ENCODE measurements at regions of chr12 and their contacts with region 1.

Region 1: DNA sequence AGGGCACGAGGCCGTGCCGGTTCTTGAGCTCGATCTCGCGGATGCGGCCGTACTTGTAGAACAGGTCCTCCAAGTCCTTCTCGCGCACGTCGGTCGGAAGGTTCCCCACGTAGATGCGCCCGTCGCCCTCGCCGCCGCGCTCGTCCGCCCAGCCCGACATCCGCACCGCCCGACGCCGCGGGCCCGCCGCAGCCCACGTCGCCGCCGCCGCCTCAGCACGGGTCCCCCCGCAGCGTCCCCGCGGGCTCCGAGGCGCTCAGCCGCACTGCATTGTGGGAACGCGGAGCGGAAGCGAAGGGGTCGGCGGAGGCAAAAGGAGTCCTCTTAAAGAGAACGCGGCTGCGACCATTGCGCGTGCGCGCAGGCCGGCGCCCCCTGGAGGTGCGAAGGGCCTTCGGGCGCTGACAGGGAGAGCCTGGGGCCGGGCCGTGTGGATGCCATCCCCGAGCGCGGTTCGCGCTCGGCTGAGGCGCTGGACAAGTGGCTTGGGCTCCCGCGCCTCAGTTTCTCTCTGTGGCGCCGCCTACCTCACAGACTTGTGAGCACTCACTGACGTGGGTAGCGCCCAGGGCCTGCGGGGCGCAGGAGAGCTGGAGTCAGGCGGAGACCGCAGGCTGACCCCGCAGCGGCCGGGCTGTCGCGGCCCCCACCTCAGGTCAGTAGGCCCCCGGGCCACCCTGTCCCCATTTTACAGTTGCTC is at the start of gene SRSF9:
- DNase-seq: peak; percentile 97
- ATAC-seq: peak; percentile 95
- H3K4me3 Mint-ChIP-seq: peak within 1 kb of the TSS; percentile 95
- H3K27ac Mint-ChIP-seq: peak within 1 kb of the TSS; percentile 88
- H3K4me1 Mint-ChIP-seq: peaks cover 36% of the 10 kb centered on the region
- H3K27me3 Mint-ChIP-seq: no peaks in the 10 kb centered on the region
- total RNA-seq, gene SRSF9: 195 to 240 TPM

Region 2: DNA sequence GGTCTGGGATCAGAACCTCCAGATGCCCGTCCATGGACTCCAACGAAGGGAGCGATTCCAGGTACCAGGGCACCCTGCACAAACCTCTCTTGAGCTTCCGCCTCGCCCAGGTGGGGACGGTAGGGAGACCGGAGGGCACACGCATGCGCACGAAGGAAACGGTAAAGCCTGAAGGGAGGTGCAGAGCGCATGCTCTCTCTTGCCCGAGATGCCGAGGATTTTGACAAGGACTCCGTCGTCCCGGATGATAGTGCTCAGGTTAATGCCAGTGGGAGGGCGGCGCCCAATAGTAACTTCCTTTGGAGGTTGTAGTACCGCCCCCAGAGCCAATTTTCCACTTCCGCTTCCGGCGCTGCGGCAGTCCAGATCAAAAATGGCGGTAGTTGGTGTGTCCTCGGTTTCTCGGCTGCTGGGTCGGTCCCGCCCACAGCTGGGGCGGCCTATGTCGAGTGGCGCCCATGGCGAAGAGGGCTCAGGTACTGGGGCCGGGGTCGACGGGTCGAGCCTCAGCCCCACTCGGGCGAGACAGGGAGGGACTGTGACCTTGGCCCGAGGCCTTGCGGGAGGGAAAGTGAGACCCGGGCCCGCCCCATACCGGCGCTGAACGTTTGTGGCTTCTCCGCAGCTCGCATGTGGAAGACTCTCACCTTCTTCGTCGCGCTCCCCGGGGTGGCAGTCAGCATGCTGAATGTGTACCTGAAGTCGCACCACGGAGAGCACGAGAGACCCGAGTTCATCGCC is 31.7 kb before region 1 on chr12 and contains the start of gene COX6A1:
- CTCF ChIA-PET with region 1: interaction called, 30 read pairs
- DNase-seq: peak; percentile 99
- ATAC-seq: peak; percentile 98
- H3K4me3 Mint-ChIP-seq: peak within 1 kb of the TSS; percentile 86
- H3K27ac Mint-ChIP-seq: peak within 1 kb of the TSS; percentile 95
- H3K4me1 Mint-ChIP-seq: peaks cover 39% of the 10 kb centered on the region
- H3K27me3 Mint-ChIP-seq: no peaks in the 10 kb centered on the region
- total RNA-seq, gene COX6A1: 329 to 408 TPM

Region 3: DNA sequence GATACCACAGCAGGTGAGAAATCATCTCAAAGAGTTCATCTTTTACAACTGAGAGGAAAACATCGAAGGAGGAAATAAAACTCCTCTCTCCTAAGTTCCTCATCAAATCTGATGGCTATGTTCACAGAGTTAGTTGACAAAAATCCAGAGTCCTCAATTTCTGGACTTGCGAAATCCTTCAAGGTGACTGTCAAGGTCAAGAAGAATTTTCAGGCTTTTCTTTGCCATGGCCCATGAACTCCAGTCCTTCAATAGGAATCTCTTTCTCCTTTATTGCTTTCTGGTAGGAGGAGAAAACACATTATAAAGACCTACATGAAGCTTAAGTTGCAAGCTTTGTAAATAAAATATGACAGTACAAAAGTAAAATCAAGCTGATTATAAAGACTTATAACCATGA is 24.9 kb before region 1 on chr12:
- CTCF ChIA-PET with region 1: interaction called, 30 read pairs
- DNase-seq: no peak
- ATAC-seq: no peak
- H3K4me3 Mint-ChIP-seq: peak overlapping the region; percentile 99
- H3K27ac Mint-ChIP-seq: peak overlapping the region; percentile 90
- H3K4me1 Mint-ChIP-seq: peaks cover 57% of the 10 kb centered on the region
- H3K27me3 Mint-ChIP-seq: no peaks in the 10 kb centered on the region

Region 4: DNA sequence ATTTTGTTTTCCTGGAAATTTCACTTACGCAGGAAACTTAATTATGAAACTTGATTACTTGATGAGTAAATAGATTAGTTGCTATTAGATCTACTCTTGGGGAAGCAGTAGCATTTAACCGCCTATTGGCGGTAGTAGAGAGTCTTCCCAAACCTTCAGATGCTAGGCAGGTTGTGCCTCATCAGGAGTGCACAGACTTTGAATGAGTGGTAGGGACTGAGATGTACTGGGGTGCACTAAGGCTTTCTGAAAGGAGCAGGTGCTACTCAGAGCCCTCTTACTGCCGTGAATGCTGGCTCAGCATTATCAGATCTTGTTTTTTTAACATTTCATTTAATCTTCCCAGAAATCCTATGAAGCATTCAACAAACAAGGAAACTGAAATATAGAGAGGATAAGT is 15.6 kb before region 1 on chr12:
- CTCF ChIA-PET with region 1: interaction called, 37 read pairs
- DNase-seq: peak; percentile 48
- ATAC-seq: peak; percentile 90
- H3K4me3 Mint-ChIP-seq: no peak overlapping the region
- H3K27ac Mint-ChIP-seq: peak overlapping the region; percentile 15
- H3K4me1 Mint-ChIP-seq: peaks cover 8% of the 10 kb centered on the region
- H3K27me3 Mint-ChIP-seq: no peaks in the 10 kb centered on the region

Region 5: DNA sequence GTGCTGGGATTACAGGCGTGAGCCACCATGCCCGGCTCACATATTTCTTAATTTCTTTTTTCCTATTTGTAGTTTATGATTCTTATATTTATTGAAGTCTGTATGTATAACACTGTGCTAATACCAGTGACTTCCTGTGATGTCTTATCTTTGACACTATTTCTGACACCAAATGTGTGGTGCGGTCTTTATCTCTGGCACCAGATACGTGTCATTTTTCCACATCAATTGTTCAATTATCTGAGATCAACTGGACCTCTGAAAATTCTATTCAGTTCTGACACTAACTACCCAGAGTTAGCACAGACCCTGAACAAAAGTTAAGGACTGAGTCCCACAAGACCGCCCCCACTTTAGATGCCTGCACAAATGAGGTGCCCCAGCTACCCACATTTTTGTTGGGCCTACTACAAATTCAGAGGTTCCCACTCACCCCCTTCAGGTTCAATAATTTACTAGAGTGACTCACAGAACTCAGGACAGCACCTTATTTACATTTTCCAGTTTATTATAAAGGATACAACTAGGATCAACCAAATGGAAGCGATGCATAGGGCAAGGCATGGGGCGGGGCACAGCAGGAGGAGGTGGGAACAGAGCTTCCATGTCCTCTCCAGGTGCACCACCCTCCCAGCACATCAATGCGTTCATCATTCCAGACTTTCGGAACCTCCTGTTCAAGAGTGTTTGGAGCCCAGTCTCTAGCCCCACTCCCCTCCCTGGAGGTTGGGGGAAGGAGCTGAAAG is 11.6 kb after region 1 on chr12:
- CTCF ChIA-PET with region 1: interaction called, 13 read pairs
- DNase-seq: no peak
- ATAC-seq: peak; percentile 51
- H3K4me3 Mint-ChIP-seq: no peak overlapping the region
- H3K27ac Mint-ChIP-seq: no peak overlapping the region
- H3K4me1 Mint-ChIP-seq: peaks cover 14% of the 10 kb centered on the region
- H3K27me3 Mint-ChIP-seq: no peaks in the 10 kb centered on the region

Region 6: DNA sequence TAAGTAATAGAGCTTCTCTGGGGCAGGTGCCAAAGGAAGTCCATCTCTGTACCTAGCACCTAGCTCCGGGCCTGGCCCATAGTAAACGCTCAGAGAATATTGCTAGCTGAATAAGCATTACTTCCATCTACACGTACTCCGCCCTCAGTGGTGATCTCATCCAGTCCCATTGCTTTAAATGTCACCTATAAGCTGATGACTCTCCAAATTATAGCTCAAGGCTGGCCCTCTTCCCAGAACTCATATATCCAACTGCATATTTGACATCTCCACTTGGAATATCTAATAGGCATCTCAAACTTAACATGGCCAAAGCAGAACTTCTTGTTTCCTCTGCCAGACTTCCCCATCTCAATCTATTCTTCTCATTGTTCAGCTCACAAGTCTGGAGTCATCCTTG is 19.4 kb after region 1 on chr12:
- CTCF ChIA-PET with region 1: interaction called, 29 read pairs
- DNase-seq: no peak
- ATAC-seq: no peak
- H3K4me3 Mint-ChIP-seq: no peak overlapping the region
- H3K27ac Mint-ChIP-seq: no peak overlapping the region
- H3K4me1 Mint-ChIP-seq: no peaks in the 10 kb centered on the region
- H3K27me3 Mint-ChIP-seq: no peaks in the 10 kb centered on the region

Region 7: DNA sequence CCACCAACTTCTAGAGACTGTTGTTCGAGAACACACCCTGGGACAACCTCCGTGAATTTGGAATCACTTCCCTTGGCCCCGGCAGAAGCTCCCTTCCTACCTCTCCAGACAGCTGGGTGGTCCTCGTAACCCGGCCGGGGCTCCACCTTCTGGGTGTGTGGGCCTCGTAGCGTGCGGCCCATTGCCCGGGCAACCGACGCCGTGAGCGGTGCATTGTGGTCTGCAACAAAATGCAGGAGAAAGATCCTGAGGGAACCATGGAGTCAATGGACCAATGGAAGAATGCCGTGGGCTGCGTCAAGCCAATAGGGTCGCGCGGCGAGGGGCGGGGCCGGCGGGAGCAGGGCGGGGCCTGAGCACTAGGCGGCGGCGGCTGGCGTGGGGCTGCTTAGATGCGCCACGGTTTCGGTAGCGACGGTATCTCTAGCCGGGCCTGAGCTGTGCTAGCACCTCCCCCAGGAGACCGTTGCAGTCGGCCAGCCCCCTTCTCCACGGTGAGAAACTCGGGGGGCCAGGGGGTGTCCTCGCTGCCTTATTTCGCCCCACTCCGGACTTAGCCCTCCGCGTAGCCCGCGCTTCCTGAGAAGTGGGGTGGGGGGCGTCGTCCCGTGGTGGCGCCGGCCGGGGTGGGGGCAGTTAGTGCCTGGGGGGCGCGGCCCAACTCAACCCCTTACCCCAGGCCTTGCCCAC is 26.3 kb after region 1 on chr12 and contains the start of gene DYNLL1:
- CTCF ChIA-PET with region 1: interaction called, 29 read pairs
- DNase-seq: peak; percentile 97
- ATAC-seq: peak; percentile 96
- H3K4me3 Mint-ChIP-seq: peak within 1 kb of the TSS; percentile 84
- H3K27ac Mint-ChIP-seq: peak within 1 kb of the TSS; percentile 72
- H3K4me1 Mint-ChIP-seq: peaks cover 30% of the 10 kb centered on the region
- H3K27me3 Mint-ChIP-seq: no peaks in the 10 kb centered on the region
- total RNA-seq, gene DYNLL1: 190 to 264 TPM

Measured in activated CD8-positive, alpha-beta memory T cell treated with anti-CD3 and anti-CD28 coated beads, Interleukin-2, amount 10 ng/mL, durations not matched to agents 7 days and 5 days (primary cell).